ENCODE measurements at regions of chr16 and their contacts with region 1.

Region 1: DNA sequence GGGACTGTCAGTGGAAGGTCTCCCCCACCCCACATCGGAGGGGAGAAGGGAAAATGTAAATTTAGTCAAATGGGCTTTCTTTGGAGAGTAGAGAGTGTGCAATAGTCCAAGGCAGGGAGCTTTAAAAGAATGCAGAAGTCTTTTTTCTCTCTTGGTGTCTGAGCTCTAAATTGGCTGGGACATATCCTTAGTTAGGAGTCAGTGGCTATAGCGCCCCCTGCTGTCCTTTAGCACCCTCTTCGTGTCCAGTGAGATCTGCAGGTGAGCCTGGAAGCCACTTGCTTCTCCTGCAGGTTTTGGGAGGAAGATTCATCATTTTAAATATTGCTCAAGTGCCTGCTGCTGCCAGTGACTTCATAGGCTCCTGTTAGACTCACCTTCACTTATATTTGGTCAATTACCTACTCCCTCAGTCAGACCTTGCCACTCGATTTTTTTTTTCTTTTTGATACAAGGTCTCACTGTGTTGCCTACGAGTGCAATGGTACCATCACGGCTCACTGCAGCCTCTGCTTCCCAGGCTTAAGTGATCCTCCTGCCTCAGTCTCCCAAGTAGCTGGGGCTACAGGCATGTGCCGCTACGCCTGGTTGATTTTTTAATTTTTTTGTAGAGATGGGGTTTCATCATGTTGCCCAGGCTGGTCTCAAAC is 174.8 kb downstream of the PRKCB start:
- DNase-seq: peak; percentile 89
- ATAC-seq: peak; percentile 68
- H3K4me3 Mint-ChIP-seq: no peak overlapping the region
- H3K27ac Mint-ChIP-seq: no peak overlapping the region
- H3K4me1 Mint-ChIP-seq: peaks cover 57% of the 10 kb centered on the region
- H3K27me3 Mint-ChIP-seq: no peaks in the 10 kb centered on the region

Region 2: GRCh38 chr16:23847251-23847650 is 163.3 kb before region 1 on chr16:
- CTCF ChIA-PET with region 1: interaction called, 14 read pairs
- POLR2A ChIA-PET with region 1: no interaction called
- DNase-seq: no peak
- ATAC-seq: no peak
- H3K4me3 Mint-ChIP-seq: no peak overlapping the region
- H3K27ac Mint-ChIP-seq: peak overlapping the region; percentile 46
- H3K4me1 Mint-ChIP-seq: peaks cover 81% of the 10 kb centered on the region
- H3K27me3 Mint-ChIP-seq: no peaks in the 10 kb centered on the region

Region 3: DNA sequence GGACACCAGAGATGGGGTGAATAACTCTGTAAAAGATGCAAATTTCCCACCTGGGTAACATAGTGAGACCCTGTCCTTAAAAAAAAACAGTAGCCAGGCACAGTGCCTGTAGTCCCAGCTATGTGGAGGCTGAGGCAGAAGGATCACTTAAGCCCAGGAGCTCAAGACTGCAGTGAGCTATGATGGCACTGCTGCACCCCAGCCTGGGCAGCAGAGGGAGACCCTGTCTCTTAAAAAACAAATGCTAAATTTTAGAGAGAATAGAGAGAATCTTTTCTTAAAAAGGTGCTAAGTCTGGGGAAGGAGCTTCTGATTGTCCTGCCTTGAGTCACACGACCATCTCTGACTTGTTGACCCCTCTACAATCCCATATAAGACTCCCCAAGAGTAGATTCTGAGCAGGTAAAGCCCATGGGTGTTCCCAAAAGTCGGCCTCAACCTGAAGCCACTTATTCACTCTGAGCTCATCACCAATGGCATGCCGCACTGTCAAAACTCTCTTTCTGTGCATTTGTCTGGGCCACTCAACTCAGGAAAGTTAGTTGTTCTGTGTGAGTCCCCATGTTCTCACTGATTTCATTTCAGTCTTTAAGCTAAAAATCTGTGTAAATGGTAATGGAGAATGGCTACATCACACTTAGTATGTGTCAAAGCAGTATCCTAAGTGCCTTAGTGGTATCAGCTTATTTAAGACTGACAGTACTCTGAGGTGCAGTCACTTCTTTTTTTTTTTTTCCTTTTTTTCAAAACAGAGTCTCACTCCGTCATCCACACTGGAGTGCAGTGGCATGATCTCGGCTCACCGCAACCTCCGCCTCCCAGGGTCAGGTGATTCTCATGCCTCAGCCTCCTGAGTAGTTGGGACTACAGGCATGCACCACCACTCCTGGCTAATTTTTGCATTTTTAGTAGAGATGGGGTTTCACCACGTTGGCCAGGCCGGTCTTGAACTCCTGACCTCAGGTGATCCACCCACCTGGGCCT is 133.2 kb before region 1 on chr16:
- CTCF ChIA-PET with region 1: interaction called, 85 read pairs
- POLR2A ChIA-PET with region 1: interaction called, 3 read pairs
- DNase-seq: no peak
- ATAC-seq: no peak
- H3K4me3 Mint-ChIP-seq: no peak overlapping the region
- H3K27ac Mint-ChIP-seq: no peak overlapping the region
- H3K4me1 Mint-ChIP-seq: peaks cover 78% of the 10 kb centered on the region
- H3K27me3 Mint-ChIP-seq: no peaks in the 10 kb centered on the region

Region 4: GRCh38 chr16:23952128-23952970 is 58.2 kb before region 1 on chr16:
- CTCF ChIA-PET with region 1: interaction called, 11 read pairs
- POLR2A ChIA-PET with region 1: interaction called, 6 read pairs
- DNase-seq: peak; percentile 37
- ATAC-seq: no peak
- H3K4me3 Mint-ChIP-seq: peak overlapping the region; percentile 23
- H3K27ac Mint-ChIP-seq: peak overlapping the region; percentile 72
- H3K4me1 Mint-ChIP-seq: peaks cover 71% of the 10 kb centered on the region
- H3K27me3 Mint-ChIP-seq: no peaks in the 10 kb centered on the region

Region 5: GRCh38 chr16:23999663-24000062 is 10.9 kb before region 1 on chr16:
- CTCF ChIA-PET with region 1: interaction called, 20 read pairs
- POLR2A ChIA-PET with region 1: no interaction called
- DNase-seq: no peak
- ATAC-seq: no peak
- H3K4me3 Mint-ChIP-seq: no peak overlapping the region
- H3K27ac Mint-ChIP-seq: no peak overlapping the region
- H3K4me1 Mint-ChIP-seq: peaks cover 16% of the 10 kb centered on the region
- H3K27me3 Mint-ChIP-seq: no peaks in the 10 kb centered on the region

Region 6: DNA sequence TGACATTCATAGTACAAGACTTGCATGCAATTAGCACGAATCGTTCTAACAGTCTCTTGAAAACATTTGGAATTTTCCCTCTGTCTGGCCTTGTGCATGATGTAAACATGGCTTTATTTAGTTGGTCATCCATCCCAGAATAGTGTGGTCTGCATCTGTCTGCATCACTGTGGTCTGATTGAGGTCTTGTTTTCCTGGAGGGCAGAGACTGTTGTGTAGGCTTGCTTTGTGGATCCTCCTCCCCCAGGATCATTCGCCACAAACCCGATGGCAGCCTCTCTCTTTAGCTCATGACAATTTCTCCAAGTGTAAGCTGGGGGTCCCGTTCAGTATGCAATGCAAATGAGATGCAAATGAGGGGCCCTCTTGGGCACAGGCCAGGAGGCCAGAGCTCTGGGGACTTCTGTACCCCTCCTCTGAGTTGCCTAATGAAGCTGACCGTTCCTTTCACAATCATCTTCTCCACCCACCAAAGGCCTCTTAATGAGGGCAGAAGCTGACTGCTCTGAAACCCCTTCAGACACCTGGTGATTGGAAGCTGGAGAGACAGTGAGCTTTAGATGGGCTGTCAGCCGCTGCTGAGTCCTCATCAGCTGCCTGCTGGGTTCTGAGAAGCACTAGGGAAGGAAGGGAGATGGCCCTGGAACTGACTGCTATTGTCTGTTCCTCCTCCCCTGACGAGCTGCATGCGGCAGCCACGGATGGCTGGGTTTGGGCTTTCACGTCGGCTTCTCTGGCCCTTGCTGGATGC is 44.4 kb after region 1 on chr16:
- CTCF ChIA-PET with region 1: no interaction called
- POLR2A ChIA-PET with region 1: no interaction called
- DNase-seq: no peak
- ATAC-seq: no peak
- H3K4me3 Mint-ChIP-seq: no peak overlapping the region
- H3K27ac Mint-ChIP-seq: no peak overlapping the region
- H3K4me1 Mint-ChIP-seq: no peaks in the 10 kb centered on the region
- H3K27me3 Mint-ChIP-seq: no peaks in the 10 kb centered on the region

Region 7: GRCh38 chr16:24069036-24069590 is 58.5 kb after region 1 on chr16:
- CTCF ChIA-PET with region 1: no interaction called
- POLR2A ChIA-PET with region 1: no interaction called
- DNase-seq: no peak
- ATAC-seq: no peak
- H3K4me3 Mint-ChIP-seq: no peak overlapping the region
- H3K27ac Mint-ChIP-seq: no peak overlapping the region
- H3K4me1 Mint-ChIP-seq: peaks cover 22% of the 10 kb centered on the region
- H3K27me3 Mint-ChIP-seq: no peaks in the 10 kb centered on the region